ENCODE measurements at regions of chr2 and their contacts with region 1.

Region 1: GRCh38 chr2:168835969-168836368 is 33.5 kb downstream of the NOSTRIN start:
- DNase-seq: no peak
- ATAC-seq: no peak
- H3K4me3 ChIP-seq: no peak overlapping the region
- H3K27ac ChIP-seq: no peak overlapping the region
- H3K4me1 ChIP-seq: no peaks in the 10 kb centered on the region
- H3K27me3 ChIP-seq: no peaks in the 10 kb centered on the region
- CTCF ChIP-seq: no peak

Region 2: GRCh38 chr2:168780669-168781071 is 55.3 kb before region 1 on chr2:
- intact Hi-C with region 1: loop called in 3 of 10 experiments (anchors 10 kb)
- DNase-seq: no peak
- ATAC-seq: peak in 2 of 8 donors; percentile 21 to 31
- H3K4me3 ChIP-seq: no peak overlapping the region
- H3K27ac ChIP-seq: no peak overlapping the region
- H3K4me1 ChIP-seq: peaks cover 0 to 15% (median 0%) of the 10 kb centered on the region in 9 donors
- H3K27me3 ChIP-seq: no peaks in the 10 kb centered on the region
- CTCF ChIP-seq: no peak